ENCODE measurements at regions of chr5 and their contacts with region 1.

Region 1: DNA sequence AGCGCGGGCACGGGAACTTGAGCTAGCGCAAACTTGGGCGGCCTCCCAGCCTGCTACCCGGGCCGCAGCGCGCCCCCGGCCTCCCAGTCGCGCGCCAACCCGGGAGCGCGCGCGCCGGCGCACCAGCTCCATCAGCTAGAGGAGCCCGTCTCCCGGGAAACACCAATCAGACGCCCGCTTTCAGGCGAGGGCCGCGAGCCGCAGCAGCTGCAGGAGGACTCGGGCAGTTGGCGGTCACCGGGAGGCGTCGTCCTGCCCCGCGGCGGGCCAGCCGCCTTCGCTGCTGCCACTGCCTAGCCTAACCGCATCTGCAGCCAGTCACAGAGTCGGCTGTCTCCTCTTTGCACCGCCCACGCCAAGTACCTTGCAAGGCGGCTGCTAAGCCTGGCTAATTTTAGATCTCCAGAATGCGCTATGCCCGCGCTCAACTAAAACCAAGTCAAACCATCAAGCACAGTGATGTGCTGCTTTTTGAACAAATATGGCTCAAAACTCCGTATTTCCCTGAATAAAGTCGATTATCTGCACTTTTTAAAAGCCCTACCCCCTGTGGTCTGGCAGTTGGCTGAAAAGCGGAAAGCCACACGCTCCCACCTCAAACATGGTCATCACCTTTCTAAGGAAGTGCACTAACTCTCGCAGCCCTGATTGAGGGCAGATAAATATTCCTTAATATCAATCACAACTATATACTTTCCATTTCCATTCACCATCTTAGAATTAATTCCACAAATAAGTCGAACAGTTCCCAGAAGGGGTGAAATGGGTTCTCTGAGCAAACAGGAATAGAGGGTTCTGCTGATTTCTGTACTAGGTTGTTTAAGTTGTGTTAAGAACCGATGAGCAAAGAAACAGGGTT is 221.8 kb downstream of the MEF2C start:
- DNase-seq: no peak
- ATAC-seq: peak; percentile 82
- H3K4me3 ChIP-seq: peak overlapping the region; percentile 43; the same call in 1 of the 2 replicates
- H3K27ac ChIP-seq: no peak overlapping the region
- H3K4me1 ChIP-seq: peaks cover 20% of the 10 kb centered on the region
- H3K27me3 ChIP-seq: peaks cover 0 to 30% of the 10 kb centered on the region in 2 experiments; a peak in 2 of 4 replicates
- CTCF ChIP-seq: no peak
- EP300 ChIP-seq: no peak
- POLR2A ChIP-seq: no peak
- RAD21 ChIP-seq: no peak

Region 2: GRCh38 chr5:88673253-88674105 is 12.3 kb after region 1 on chr5:
- CTCF ChIA-PET with region 1: interaction called, 6 read pairs
- POLR2A ChIA-PET with region 1: no interaction called
- RAD21 ChIA-PET with region 1: interaction called, 5 read pairs
- SMC1A ChIA-PET with region 1: interaction called, 6 read pairs
- in situ Hi-C with region 1: no loop called
- intact Hi-C with region 1: loop called (anchors 1 kb)
- DNase-seq: no peak
- ATAC-seq: no peak
- H3K4me3 ChIP-seq: peak overlapping the region; percentile 75; the same call in 1 of the 2 replicates
- H3K27ac ChIP-seq: no peak overlapping the region
- H3K4me1 ChIP-seq: no peaks in the 10 kb centered on the region; the same call in 1 of the 2 replicates
- H3K27me3 ChIP-seq: peaks cover 2 to 19% of the 10 kb centered on the region in 2 experiments
- CTCF ChIP-seq: no peak
- EP300 ChIP-seq: no peak
- POLR2A ChIP-seq: no peak
- RAD21 ChIP-seq: no peak

Measured in GM12878 (cell line).